ENCODE measurements at regions of chr10 and their contacts with region 1.

Region 1: GRCh38 chr10:33052263-33052875 is 94.3 kb upstream of the ITGB1 start:
- DNase-seq: no peak
- H3K4me3 ChIP-seq: no peak overlapping the region
- H3K27ac ChIP-seq: no peak overlapping the region
- H3K4me1 ChIP-seq: peaks cover 16% of the 10 kb centered on the region
- H3K27me3 ChIP-seq: no peaks in the 10 kb centered on the region
- CTCF ChIP-seq: no peak
- POLR2A ChIP-seq: no peak

Region 2: GRCh38 chr10:33022090-33022489 is 30.3 kb before region 1 on chr10:
- CTCF ChIA-PET with region 1: no interaction called
- POLR2A ChIA-PET with region 1: no interaction called
- dilution Hi-C with region 1: no loop called
- intact Hi-C with region 1: no loop called
- DNase-seq: no peak
- H3K4me3 ChIP-seq: no peak overlapping the region
- H3K27ac ChIP-seq: no peak overlapping the region
- H3K4me1 ChIP-seq: no peaks in the 10 kb centered on the region
- H3K27me3 ChIP-seq: no peaks in the 10 kb centered on the region
- CTCF ChIP-seq: no peak
- POLR2A ChIP-seq: no peak

Region 3: GRCh38 chr10:33066558-33067236 is 14.3 kb after region 1 on chr10:
- CTCF ChIA-PET with region 1: interaction called, 10 read pairs
- POLR2A ChIA-PET with region 1: no interaction called
- dilution Hi-C with region 1: no loop called
- intact Hi-C with region 1: no loop called
- DNase-seq: peak; percentile 66
- H3K4me3 ChIP-seq: no peak overlapping the region
- H3K27ac ChIP-seq: no peak overlapping the region
- H3K4me1 ChIP-seq: peaks cover 8% of the 10 kb centered on the region
- H3K27me3 ChIP-seq: no peaks in the 10 kb centered on the region
- CTCF ChIP-seq: peak in 1 of 2 donors; percentile 18
- POLR2A ChIP-seq: no peak

Measured in endothelial cell of umbilical vein (primary cell).